H1 (cell line): ENCODE measurements at regions of chr6 and their contacts with region 1.

Region 1: DNA sequence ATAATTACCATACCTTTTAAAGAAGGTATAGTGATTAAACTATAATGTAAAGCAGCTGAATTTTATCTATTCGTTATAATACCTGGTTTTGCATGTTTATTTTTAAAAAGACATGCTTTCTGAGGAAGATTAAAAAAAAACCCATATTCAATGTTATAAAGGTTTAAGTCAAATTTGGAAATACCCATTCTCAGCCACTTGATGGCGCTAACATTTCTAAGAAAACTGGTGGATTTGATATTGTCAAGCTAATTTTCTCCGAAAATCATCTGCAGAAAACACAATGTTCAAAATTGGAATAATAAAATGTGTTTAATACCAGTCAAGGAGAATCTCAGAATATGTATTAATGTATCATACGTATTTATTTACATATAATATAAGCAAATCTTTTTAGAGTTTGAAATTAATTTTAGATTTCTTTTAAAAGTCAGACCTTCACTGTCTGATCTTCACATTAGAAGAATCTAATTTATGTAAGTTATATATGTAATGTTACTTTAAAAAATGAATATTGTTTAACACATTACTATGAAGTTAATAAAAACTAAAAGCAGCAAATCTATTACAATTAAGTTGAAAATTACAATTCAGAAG is 35.0 kb downstream of the SHPRH start:
- DNase-seq: no peak
- H3K4me3 ChIP-seq: no peak overlapping the region
- H3K27ac ChIP-seq: no peak overlapping the region
- H3K4me1 ChIP-seq: no peaks in the 10 kb centered on the region
- H3K27me3 ChIP-seq: no peaks in the 10 kb centered on the region
- CTCF ChIP-seq: peak in 2 of 3 experiments; percentile 20 to 49; a peak in 2 of 4 replicates
- EP300 ChIP-seq: no peak
- POLR2A ChIP-seq: no peak
- RAD21 ChIP-seq: peak; percentile 33 to 47

Region 2: DNA sequence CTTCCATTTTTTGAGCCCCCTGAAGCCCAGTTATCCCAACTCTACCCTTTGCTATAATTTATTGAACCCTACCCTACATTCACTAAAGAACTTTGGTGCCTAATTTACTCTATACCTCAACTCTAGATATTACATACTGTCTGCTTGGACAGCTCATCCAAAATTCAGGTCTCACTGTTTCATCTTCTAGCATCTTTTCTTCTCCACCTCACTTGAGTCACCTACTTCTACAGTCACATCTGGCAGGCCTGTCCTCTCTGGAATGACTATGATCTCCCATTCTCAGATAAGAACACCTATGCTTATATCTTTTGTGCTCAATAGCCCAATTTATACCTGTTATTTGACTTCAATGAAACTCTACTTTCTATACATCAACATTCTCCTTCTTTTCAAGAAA is 23.0 kb before region 1 on chr6:
- CTCF ChIA-PET with region 1: interaction called, 10 read pairs
- POLR2A ChIA-PET with region 1: no interaction called
- DNase-seq: no peak
- H3K4me3 ChIP-seq: no peak overlapping the region
- H3K27ac ChIP-seq: no peak overlapping the region
- H3K4me1 ChIP-seq: no peaks in the 10 kb centered on the region
- H3K27me3 ChIP-seq: no peaks in the 10 kb centered on the region
- CTCF ChIP-seq: no peak
- EP300 ChIP-seq: no peak
- POLR2A ChIP-seq: no peak
- RAD21 ChIP-seq: no peak

Region 3: GRCh38 chr6:145953200-145953599 is 24.1 kb after region 1 on chr6:
- CTCF ChIA-PET with region 1: no interaction called
- POLR2A ChIA-PET with region 1: no interaction called
- DNase-seq: no peak
- H3K4me3 ChIP-seq: no peak overlapping the region
- H3K27ac ChIP-seq: no peak overlapping the region
- H3K4me1 ChIP-seq: no peaks in the 10 kb centered on the region
- H3K27me3 ChIP-seq: no peaks in the 10 kb centered on the region
- CTCF ChIP-seq: no peak
- EP300 ChIP-seq: no peak
- POLR2A ChIP-seq: no peak
- RAD21 ChIP-seq: no peak